ENCODE measurements at regions of chr14 and their contacts with region 1.

Region 1: GRCh38 chr14:39266871-39267591 is 33.3 kb downstream of the MIA2 start:
- DNase-seq: peak; percentile 68
- H3K4me3 Mint-ChIP-seq: peak overlapping the region; percentile 72
- H3K27ac Mint-ChIP-seq: peak overlapping the region; percentile 93
- H3K4me1 Mint-ChIP-seq: peaks cover 48% of the 10 kb centered on the region
- H3K27me3 Mint-ChIP-seq: no peaks in the 10 kb centered on the region

Region 2: GRCh38 chr14:39174560-39175444 is 92.2 kb before region 1 on chr14 and contains the start of gene PNN:
- CTCF ChIA-PET with region 1: interaction called, 5 read pairs
- intact Hi-C with region 1: loop called (anchors 1 kb)
- DNase-seq: peak; percentile 98
- H3K4me3 Mint-ChIP-seq: peak within 1 kb of the TSS; percentile 100
- H3K27ac Mint-ChIP-seq: peak within 1 kb of the TSS; percentile 100
- H3K4me1 Mint-ChIP-seq: peaks cover 44% of the 10 kb centered on the region
- H3K27me3 Mint-ChIP-seq: no peaks in the 10 kb centered on the region
- total RNA-seq, gene PNN: 99.6 to 100 TPM

Region 3: GRCh38 chr14:39289523-39289922 is 22.5 kb after region 1 on chr14:
- CTCF ChIA-PET with region 1: no interaction called
- intact Hi-C with region 1: no loop called
- DNase-seq: no peak
- H3K4me3 Mint-ChIP-seq: no peak overlapping the region
- H3K27ac Mint-ChIP-seq: no peak overlapping the region
- H3K4me1 Mint-ChIP-seq: peaks cover 1% of the 10 kb centered on the region
- H3K27me3 Mint-ChIP-seq: no peaks in the 10 kb centered on the region

Region 4: DNA sequence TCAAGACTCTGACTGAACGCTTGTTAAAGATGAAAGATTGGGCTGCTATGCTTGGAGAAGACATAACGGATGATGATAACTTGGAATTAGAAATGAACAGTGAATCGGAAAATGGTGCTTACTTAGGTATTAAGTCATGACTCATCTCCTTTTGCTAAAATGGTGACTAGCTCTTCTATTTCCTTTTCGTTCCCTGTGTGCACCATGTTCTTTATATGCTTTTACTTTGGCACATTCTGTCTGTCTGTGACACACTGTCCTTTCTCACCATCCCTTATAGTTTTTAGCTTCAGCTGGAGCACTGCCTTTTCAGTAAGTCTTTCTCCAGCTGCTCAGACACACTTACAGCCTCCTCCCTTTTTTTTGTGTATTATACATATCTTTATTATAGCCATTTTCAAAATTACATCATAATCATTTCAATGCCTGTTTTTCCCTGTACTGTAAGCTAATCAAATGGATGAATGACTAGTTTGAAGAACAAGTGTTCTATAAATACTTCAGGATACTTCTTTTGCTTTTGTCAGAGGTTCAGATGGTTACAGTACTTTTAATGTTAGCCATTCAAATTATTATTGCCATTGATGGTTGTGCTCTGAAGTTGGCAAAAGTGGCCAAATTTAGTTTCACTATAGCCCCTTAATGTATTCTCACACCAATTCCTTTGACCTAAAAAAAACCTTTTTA is 35.2 kb after region 1 on chr14:
- CTCF ChIA-PET with region 1: no interaction called
- intact Hi-C with region 1: no loop called
- DNase-seq: no peak
- H3K4me3 Mint-ChIP-seq: no peak overlapping the region
- H3K27ac Mint-ChIP-seq: no peak overlapping the region
- H3K4me1 Mint-ChIP-seq: peaks cover 6% of the 10 kb centered on the region
- H3K27me3 Mint-ChIP-seq: no peaks in the 10 kb centered on the region

Region 5: DNA sequence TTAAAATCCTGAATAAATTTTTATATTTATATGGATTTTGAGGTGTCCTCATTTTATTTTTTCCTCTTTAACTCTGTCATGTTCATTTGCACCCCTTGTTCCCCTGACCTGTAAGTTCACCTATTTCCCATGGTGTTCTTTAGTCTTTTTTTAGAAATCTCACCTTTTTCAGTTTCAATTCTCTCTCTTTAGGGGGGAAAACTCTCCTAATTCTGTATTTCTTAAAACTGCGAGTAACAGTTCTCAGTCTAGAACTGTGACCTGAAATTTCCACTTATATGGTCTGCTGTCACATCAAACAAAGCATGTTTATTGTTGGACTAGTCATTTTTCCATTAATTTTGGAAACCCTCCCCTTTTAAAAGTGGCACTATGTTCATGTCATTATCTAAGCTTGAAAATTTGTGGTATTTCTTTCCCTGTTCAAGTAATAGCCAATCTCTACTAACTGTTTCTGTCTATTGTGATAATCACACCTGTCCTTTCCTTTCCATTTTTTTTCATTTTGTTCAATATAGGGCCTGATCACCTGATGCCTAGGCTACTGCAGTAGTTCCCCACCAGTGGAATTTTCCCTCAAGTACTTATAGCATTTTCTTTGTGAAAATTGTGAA is 179.2 kb after region 1 on chr14:
- CTCF ChIA-PET with region 1: no interaction called
- intact Hi-C with region 1: loop called (anchors 5 kb)
- DNase-seq: no peak
- H3K4me3 Mint-ChIP-seq: no peak overlapping the region
- H3K27ac Mint-ChIP-seq: no peak overlapping the region
- H3K4me1 Mint-ChIP-seq: peaks cover 39% of the 10 kb centered on the region
- H3K27me3 Mint-ChIP-seq: no peaks in the 10 kb centered on the region